Mammary epithelial cell (primary cell): ENCODE measurements at regions of chr14 and their contacts with region 1.

Region 1: DNA sequence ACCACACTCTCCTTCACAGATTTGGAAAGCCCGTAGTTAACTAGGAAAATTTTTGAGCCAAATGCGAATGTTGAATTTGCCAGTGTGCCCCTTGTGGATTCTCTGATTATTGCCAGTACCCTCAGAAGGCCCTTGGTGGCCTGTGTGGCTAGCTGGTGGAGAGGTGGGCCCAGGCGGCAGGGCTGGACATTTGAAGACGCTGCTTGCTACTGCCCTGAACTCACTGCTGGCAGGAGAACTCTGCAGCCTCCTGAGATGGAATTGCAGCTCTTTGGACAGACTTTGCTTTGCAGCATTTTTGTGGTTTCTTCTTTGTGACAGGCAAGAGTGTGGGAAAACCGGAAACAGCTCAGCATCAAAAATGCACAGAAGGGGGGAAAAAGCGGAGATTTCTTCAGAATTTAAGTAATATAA is 97.6 kb downstream of the TGFB3 start:
- DNase-seq: peak; percentile 46
- H3K4me3 ChIP-seq: no peak overlapping the region
- H3K27ac ChIP-seq: no peak overlapping the region
- H3K4me1 ChIP-seq: peaks cover 29% of the 10 kb centered on the region
- H3K27me3 ChIP-seq: no peaks in the 10 kb centered on the region
- CTCF ChIP-seq: peak; percentile 29 to 32

Region 2: DNA sequence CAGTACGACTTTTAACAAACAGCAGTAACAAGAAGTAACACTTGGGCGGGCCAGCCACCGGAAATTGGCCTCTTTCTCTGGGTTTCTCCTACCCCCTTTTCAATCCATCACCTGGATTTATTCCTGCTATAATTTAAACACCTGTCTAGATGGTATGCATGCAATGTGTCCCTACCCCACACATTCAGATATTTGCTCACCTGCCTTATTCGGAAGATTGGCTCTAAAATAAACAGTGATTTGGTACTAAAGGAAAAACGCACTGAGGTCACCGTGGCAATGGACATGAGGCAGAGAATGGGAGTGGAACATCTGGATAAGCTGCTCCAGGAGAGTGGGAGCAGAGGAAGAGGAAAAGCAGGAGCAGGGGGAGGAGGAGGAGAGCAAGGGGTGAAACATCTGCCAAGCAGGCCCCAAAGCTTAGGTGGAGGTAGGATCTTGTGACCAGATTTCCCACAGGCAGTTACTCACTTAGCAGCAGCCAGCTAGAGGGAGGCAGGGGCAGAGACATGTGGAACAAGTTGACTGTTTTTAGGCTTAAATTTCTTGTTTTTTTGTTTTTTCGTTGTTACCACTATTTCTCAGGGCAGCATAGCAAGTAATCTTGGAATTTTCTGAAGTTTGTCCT is 72.2 kb before region 1 on chr14:
- CTCF ChIA-PET with region 1: no interaction called
- dilution Hi-C with region 1: no loop called
- in situ Hi-C with region 1: no loop called
- intact Hi-C with region 1: no loop called
- DNase-seq: no peak
- H3K4me3 ChIP-seq: no peak overlapping the region
- H3K27ac ChIP-seq: no peak overlapping the region
- H3K4me1 ChIP-seq: no peaks in the 10 kb centered on the region
- H3K27me3 ChIP-seq: no peaks in the 10 kb centered on the region
- CTCF ChIP-seq: no peak

Region 3: GRCh38 chr14:75825147-75825592 is 59.0 kb before region 1 on chr14:
- CTCF ChIA-PET with region 1: no interaction called
- dilution Hi-C with region 1: loop called (anchors 5 kb)
- in situ Hi-C with region 1: no loop called
- intact Hi-C with region 1: no loop called
- DNase-seq: no peak
- H3K4me3 ChIP-seq: no peak overlapping the region
- H3K27ac ChIP-seq: no peak overlapping the region
- H3K4me1 ChIP-seq: peaks cover 24% of the 10 kb centered on the region
- H3K27me3 ChIP-seq: no peaks in the 10 kb centered on the region
- CTCF ChIP-seq: no peak